ENCODE measurements at regions of chr2 and their contacts with region 1.

Region 1: DNA sequence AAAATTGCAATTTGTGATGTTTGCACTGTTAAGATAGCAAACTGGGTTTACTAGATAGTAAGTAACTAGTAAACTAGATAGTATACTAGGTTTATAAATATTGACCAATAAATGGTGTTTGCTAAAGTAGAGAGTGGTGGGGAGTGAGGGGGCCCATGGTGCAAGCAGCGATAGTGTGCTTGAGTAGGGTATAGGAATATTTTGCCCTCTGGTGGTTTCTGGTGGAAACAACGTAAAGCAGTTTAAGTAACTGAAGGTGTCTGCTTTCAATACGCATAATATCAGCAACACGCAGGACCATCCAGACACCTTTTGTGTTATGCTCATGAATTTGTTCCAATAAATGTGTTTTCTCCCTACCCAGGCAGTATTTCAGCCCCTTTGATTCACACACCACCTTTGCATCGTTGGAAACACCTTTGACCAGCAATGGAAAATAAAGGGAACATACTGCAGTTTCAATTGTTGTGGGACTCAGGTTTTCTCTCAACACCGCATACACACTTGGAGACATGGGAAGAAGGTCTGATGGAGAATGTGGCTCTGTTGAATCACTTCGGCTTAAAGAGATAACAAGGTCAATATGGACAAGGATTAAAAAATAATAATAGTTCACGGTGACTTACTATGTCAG is 16.7 kb upstream of the STAT1 start:
- DNase-seq: no peak

Region 2: DNA sequence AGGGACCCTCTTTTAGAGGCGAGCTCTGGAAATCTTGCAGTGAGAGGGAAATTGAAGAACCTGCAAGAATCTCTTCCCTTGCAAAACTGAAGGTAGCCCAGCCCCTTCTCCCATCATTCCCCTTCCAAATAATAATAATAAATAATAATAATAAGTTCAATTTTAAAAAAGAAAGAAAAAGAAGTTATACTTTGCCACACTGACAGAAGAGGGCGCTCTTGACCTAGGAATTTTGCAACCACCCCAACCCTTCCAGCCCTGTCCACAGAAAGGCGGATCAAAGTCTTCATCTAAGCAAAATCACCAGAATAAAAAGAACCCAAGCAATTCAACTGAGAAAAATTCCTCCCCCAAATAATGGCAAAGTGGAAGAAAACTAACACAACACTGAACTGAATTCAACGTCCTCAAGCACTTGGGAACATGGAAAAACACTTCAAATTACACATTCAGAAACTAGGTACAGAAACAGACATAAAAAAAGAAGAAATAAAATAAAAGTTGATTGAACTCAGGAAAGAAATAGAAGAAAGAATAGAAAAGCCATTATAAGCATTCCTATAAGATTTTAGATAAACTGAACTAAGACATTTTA is 248.9 kb before region 1 on chr2:
- intact Hi-C with region 1: loop called (anchors 5 kb)
- DNase-seq: no peak